ENCODE measurements at regions of chr12 and their contacts with region 1.

Region 1: DNA sequence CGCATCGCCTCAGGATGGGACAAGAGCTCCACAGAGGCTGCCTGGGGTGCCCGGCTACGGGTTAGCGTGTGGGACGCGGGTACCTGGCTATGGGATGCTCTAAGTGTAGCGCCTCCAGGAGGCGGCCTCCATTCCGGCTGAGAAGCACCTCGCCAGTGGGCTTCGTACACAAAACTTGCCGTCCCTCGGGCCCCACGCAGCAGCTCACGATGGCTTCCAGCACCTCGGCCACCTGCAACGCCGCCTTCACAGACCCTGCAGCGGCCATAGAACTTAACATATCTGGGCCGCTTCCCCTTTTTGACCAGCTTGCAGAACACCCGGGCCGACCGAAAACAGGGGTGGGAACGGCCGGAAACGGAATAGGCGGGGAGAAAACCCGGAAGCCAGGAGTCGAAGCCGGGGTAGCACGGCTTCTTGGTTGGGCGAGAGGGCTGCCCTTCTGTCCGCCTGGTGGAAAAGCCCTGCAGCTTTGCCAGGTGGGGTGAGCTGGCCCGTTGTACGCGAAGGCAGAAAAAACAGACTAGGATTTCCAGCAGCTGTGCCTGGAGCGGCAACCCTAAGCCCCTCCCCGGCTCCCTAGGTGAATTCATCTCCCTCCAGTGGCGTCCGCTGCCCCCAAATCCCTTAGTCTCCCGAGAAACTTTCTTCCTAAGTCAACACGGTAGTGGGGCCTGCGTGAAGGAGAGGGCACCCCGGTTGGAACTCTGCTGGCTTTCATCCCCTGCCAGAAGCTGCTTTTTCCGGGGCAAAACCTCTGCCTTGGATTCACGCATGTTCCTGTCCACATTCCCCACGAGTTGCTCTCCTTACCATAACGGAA is at the start of gene BBS10:
- DNase-seq: peak; percentile 93 to 96 (median 96)
- ATAC-seq: peak; percentile 99
- H3K4me3 ChIP-seq: peak within 1 kb of the TSS; percentile 100
- H3K27ac ChIP-seq: peak within 1 kb of the TSS; percentile 100
- H3K4me1 ChIP-seq: peaks cover 4% of the 10 kb centered on the region
- H3K27me3 ChIP-seq: no peaks in the 10 kb centered on the region
- total RNA-seq, gene BBS10: 7.7 to 11.5 (median 10.2) TPM

Region 2: DNA sequence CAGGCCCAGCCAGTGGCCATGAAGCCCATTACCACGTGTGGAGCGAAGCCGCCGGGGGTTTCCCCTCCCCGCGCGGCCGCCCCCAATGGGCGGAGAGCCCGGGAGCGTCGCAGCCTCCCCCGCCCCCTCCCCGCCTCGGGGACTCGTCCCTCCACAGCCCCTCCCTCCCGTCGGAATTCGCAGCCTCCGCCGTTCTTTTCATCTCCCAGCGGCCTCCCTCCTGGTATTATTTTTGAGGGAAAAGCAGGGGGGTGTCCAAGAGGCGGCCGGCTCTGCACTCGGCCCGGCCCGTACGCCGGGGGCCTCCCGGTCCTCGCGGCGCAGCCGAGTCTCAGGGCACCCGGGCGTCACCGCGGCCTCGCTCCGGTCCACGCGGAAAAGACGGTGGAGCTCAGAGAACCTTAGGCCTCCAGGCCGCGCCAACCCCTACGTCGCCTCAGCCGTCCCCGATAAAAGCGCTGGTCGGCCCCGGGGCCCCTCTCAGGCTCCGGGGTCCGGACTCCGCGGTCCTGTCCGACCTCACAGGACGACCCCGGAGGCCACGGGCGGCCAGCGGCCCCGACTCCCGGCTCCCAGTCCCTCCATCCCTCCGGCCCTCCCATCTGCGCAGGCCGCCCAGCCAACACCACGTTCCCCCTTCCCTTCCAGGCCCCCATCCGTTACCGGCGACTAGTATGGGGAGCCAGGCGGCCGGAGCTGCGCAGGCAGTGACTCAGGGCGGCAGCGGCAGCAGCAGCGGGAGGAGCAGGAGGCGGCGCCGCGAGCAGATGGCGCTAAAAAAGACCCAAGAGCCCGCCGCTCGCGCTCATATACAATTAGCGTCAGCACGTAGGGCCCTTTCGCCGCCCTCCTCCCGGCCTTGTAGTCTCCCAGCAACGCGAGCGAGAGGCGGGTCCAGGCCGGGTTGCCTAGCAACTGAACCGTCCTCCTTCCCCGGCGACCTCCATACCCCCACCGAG is 264.1 kb before region 1 on chr12 and contains the start of gene NAP1L1:
- intact Hi-C with region 1: loop called in 3 of 4 experiments (anchors 2 to 10 kb)
- DNase-seq: peak; percentile 99 to 100 (median 99)
- ATAC-seq: peak; percentile 98
- H3K4me3 ChIP-seq: peak within 1 kb of the TSS; percentile 89
- H3K27ac ChIP-seq: peak within 1 kb of the TSS; percentile 96
- H3K4me1 ChIP-seq: peaks cover 2% of the 10 kb centered on the region
- H3K27me3 ChIP-seq: no peaks in the 10 kb centered on the region
- total RNA-seq, gene NAP1L1: 352 to 471 (median 401) TPM

Region 3: GRCh38 chr12:76158518-76159321 is 189.6 kb before region 1 on chr12:
- intact Hi-C with region 1: loop called in 2 of 4 experiments (anchors 10 kb)
- DNase-seq: no peak
- ATAC-seq: peak; percentile 84 to 91
- H3K4me3 ChIP-seq: no peak overlapping the region
- H3K27ac ChIP-seq: peak overlapping the region; percentile 68
- H3K4me1 ChIP-seq: peaks cover 3% of the 10 kb centered on the region
- H3K27me3 ChIP-seq: no peaks in the 10 kb centered on the region

Region 4: GRCh38 chr12:76422543-76423438 is 74.5 kb after region 1 on chr12:
- intact Hi-C with region 1: no loop called
- DNase-seq: no peak
- ATAC-seq: no peak
- H3K4me3 ChIP-seq: no peak overlapping the region
- H3K27ac ChIP-seq: no peak overlapping the region
- H3K4me1 ChIP-seq: no peaks in the 10 kb centered on the region
- H3K27me3 ChIP-seq: no peaks in the 10 kb centered on the region

Measured in right cardiac atrium (tissue), 5 donors.